WTC11 (cell line): ENCODE measurements at regions of chr1 and their contacts with region 1.

Region 1: DNA sequence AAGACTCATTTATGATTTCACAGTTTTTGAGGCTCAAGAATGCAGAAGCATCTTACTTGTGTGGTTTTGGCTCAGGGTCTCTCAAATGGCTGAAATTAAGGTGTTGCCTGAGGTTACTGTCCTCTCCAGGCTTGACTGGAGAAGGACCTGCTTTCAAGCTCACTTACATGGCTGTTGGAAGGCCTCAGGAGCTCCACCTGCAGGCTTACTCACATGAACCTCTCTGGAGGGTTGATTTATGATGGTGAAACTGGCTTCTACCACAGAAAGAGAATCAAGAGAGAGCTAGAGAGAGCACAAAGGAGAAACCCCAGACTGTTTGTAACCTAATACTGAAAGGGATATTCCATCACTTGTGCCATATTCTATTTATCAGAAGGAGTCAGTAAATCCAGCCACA is 6.2 kb upstream of the KCNK2 start:
- DNase-seq: peak; percentile 52
- ATAC-seq: peak; percentile 98
- H3K4me3 Mint-ChIP-seq: no peak overlapping the region
- H3K27ac Mint-ChIP-seq: no peak overlapping the region
- H3K4me1 Mint-ChIP-seq: peaks cover 4% of the 10 kb centered on the region
- H3K27me3 Mint-ChIP-seq: peaks cover 44% of the 10 kb centered on the region
- CTCF ChIP-seq: no peak

Region 2: GRCh38 chr1:214808845-214809460 is 267.4 kb before region 1 on chr1:
- CTCF ChIA-PET with region 1: interaction called, 15 read pairs
- POLR2A ChIA-PET with region 1: no interaction called
- DNase-seq: no peak
- ATAC-seq: peak; percentile 99
- H3K4me3 Mint-ChIP-seq: no peak overlapping the region
- H3K27ac Mint-ChIP-seq: no peak overlapping the region
- H3K4me1 Mint-ChIP-seq: no peaks in the 10 kb centered on the region
- H3K27me3 Mint-ChIP-seq: no peaks in the 10 kb centered on the region; the same call in 1 of the 2 replicates
- CTCF ChIP-seq: no peak

Region 3: GRCh38 chr1:214823311-214824117 is 252.8 kb before region 1 on chr1:
- CTCF ChIA-PET with region 1: interaction called, 12 read pairs
- POLR2A ChIA-PET with region 1: no interaction called
- DNase-seq: peak; percentile 49
- ATAC-seq: peak; percentile 78
- H3K4me3 Mint-ChIP-seq: no peak overlapping the region
- H3K27ac Mint-ChIP-seq: no peak overlapping the region
- H3K4me1 Mint-ChIP-seq: peaks cover 13% of the 10 kb centered on the region
- H3K27me3 Mint-ChIP-seq: no peaks in the 10 kb centered on the region
- CTCF ChIP-seq: no peak

Region 4: GRCh38 chr1:214912127-214912526 is 164.2 kb before region 1 on chr1:
- CTCF ChIA-PET with region 1: no interaction called
- POLR2A ChIA-PET with region 1: no interaction called
- DNase-seq: no peak
- ATAC-seq: no peak
- H3K4me3 Mint-ChIP-seq: no peak overlapping the region
- H3K27ac Mint-ChIP-seq: no peak overlapping the region
- H3K4me1 Mint-ChIP-seq: peaks cover 3% of the 10 kb centered on the region
- H3K27me3 Mint-ChIP-seq: no peaks in the 10 kb centered on the region
- CTCF ChIP-seq: no peak

Region 5: DNA sequence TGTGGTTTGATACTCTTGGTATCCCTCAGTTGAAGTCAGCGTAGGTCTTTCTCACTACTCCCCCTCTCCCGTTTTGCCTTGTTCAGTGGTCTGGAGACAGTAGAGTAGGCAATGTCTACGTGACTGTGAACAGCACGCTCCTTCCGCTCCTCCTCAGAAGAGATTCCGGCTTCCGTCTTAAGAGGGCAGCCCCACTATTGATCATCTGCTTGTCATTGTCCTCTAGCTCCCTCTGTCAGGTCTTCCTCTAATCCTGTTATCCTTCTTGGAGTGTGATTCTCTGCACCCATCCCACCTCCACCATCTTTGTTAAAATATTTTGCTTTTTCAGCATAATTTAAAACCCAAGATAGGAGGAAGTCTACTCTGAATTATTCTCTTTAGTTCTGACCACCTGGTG is 123.7 kb before region 1 on chr1:
- CTCF ChIA-PET with region 1: interaction called, 12 read pairs
- POLR2A ChIA-PET with region 1: no interaction called
- DNase-seq: peak; percentile 28
- ATAC-seq: peak; percentile 100
- H3K4me3 Mint-ChIP-seq: no peak overlapping the region
- H3K27ac Mint-ChIP-seq: no peak overlapping the region
- H3K4me1 Mint-ChIP-seq: peaks cover 12% of the 10 kb centered on the region
- H3K27me3 Mint-ChIP-seq: no peaks in the 10 kb centered on the region
- CTCF ChIP-seq: no peak

Region 6: DNA sequence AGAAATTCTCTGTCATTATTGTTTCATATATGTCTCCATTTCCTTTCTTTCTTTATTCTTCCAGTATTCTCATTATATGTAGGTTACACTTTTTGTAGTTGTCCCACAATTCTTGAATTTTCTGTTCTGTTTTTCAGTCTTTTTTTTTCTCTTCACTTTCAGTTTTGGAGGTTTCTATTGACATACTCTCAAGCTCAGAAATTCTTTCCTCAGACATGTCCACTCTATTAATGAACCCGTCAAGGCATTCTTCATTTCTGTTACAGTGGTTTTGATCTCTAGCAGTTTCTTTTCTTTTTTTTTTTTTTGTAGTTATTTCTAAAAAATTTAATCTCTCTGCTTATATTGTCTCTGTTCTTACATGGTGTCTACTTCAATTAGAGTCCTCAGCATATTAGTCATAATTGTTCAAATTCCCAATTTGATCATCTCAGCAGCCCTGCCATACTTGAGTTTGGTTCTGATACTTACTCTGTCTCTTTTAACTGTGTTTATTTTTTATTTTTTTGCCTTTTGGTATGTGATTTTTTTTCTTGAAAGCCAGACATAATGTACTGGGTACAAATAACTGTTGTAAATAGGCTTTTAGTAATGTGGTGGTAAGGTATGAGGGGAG is 43.3 kb before region 1 on chr1:
- CTCF ChIA-PET with region 1: no interaction called
- POLR2A ChIA-PET with region 1: no interaction called
- DNase-seq: no peak
- ATAC-seq: no peak
- H3K4me3 Mint-ChIP-seq: no peak overlapping the region
- H3K27ac Mint-ChIP-seq: no peak overlapping the region
- H3K4me1 Mint-ChIP-seq: no peaks in the 10 kb centered on the region
- H3K27me3 Mint-ChIP-seq: no peaks in the 10 kb centered on the region
- CTCF ChIP-seq: no peak

Region 7: DNA sequence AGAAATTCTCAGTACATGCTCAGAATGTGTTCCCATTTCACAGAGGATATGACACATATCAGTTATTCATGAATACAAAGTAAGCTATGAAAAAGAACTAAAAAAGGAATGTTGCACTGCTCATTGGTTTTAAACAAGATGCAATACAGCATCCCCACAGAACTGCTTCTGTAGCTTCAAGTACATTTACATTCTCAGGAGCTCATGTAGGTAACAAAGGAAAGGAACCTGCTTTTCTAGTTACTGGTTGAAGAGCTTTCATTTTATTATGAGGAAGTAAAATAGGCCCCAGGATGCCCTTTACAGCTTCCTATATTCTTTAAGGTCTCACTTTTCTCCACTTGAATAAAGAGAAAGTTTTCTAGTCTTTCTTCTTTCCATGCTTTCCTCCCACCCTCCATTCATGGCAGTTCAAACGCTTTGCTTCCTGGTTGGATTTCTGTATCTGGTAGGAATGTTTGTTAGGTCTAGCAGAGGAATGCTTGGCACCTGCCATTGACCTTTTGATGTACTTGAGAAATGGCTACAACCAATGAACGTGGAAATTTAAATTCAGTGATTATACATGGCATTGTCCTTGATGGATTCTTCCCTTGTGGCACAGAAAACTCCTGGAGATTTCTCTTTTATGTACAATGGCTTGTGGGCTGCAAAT is 20.9 kb before region 1 on chr1:
- CTCF ChIA-PET with region 1: interaction called, 13 read pairs
- POLR2A ChIA-PET with region 1: no interaction called
- DNase-seq: no peak
- ATAC-seq: peak; percentile 72
- H3K4me3 Mint-ChIP-seq: no peak overlapping the region
- H3K27ac Mint-ChIP-seq: peak overlapping the region; percentile 79
- H3K4me1 Mint-ChIP-seq: peaks cover 30% of the 10 kb centered on the region
- H3K27me3 Mint-ChIP-seq: no peaks in the 10 kb centered on the region
- CTCF ChIP-seq: no peak